HCT116 (cell line): ENCODE measurements at regions of chr15 and their contacts with region 1.

Region 1: DNA sequence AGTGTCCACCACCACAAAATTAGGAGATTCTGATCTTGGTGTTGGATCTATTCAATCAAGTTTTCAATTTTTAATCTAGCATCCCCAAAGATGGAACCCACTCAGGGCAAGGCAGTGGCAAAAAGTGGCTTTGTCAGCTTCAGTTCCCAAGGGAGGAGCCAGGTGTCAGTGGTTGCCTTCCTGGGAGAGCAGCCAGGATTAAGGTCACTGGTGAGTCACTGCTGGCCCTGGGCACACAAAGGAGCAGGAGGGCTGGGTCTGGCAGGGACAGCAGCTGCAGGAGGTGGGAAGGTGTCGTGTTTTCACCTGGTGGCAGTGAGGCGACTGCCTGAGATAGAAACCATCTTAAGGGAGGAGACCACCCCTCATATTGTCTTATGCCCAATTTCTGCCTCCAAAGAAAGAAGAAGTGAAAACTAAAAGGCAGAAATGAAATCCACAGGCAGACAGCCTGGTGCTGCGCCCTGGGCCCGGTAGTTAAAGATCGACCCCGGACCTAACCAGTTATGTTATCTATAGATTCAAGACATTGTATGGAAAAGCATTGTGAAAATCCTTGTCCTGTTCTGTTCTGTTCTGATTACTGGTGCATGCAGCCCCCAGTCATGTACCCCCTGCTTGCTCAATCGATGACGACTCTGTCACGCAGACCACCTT is 5.9 kb upstream of the KLHL25 start:
- DNase-seq: peak; percentile 78
- ATAC-seq: peak; percentile 92
- H3K4me3 ChIP-seq: no peak overlapping the region
- H3K27ac ChIP-seq: no peak overlapping the region
- H3K4me1 ChIP-seq: peaks cover 15 to 20% of the 10 kb centered on the region in 2 experiments; a peak in 3 of 4 replicates
- H3K27me3 ChIP-seq: no peaks in the 10 kb centered on the region
- CTCF ChIP-seq: peak; percentile 33 to 51 (median 38); a peak in 4 of 6 replicates
- POLR2A ChIP-seq: no peak
- RAD21 ChIP-seq: peak; percentile 66

Region 2: GRCh38 chr15:85689729-85690128 is 110.9 kb before region 1 on chr15:
- CTCF ChIA-PET with region 1: no interaction called
- POLR2A ChIA-PET with region 1: no interaction called
- RAD21 ChIA-PET with region 1: no interaction called
- intact Hi-C with region 1: no loop called
- DNase-seq: no peak
- ATAC-seq: no peak
- H3K4me3 ChIP-seq: no peak overlapping the region
- H3K27ac ChIP-seq: no peak overlapping the region
- H3K4me1 ChIP-seq: no peaks in the 10 kb centered on the region
- H3K27me3 ChIP-seq: no peaks in the 10 kb centered on the region
- CTCF ChIP-seq: no peak
- POLR2A ChIP-seq: no peak
- RAD21 ChIP-seq: no peak

Region 3: GRCh38 chr15:85840065-85840801 is 39.6 kb after region 1 on chr15:
- CTCF ChIA-PET with region 1: interaction called, 6 read pairs
- POLR2A ChIA-PET with region 1: no interaction called
- RAD21 ChIA-PET with region 1: no interaction called
- intact Hi-C with region 1: loop called (anchors 2 kb)
- DNase-seq: peak; percentile 77
- ATAC-seq: peak; percentile 98
- H3K4me3 ChIP-seq: peak overlapping the region; percentile 24 to 52
- H3K27ac ChIP-seq: no peak overlapping the region
- H3K4me1 ChIP-seq: peaks cover 0 to 11% of the 10 kb centered on the region in 2 experiments; a peak in 3 of 4 replicates
- H3K27me3 ChIP-seq: 0 out of 2 replicates have a peak, but pooled peaks cover 3% of the 10 kb centered on the region
- CTCF ChIP-seq: peak; percentile 87 to 91 (median 87)
- POLR2A ChIP-seq: no peak
- RAD21 ChIP-seq: peak; percentile 88

Region 4: GRCh38 chr15:85854345-85855097 is 53.9 kb after region 1 on chr15:
- CTCF ChIA-PET with region 1: no interaction called
- POLR2A ChIA-PET with region 1: no interaction called
- RAD21 ChIA-PET with region 1: no interaction called
- intact Hi-C with region 1: no loop called
- DNase-seq: peak; percentile 52
- ATAC-seq: peak; percentile 73
- H3K4me3 ChIP-seq: no peak overlapping the region
- H3K27ac ChIP-seq: no peak overlapping the region
- H3K4me1 ChIP-seq: peaks cover 0 to 4% of the 10 kb centered on the region in 2 experiments; a peak in 1 of 4 replicates
- H3K27me3 ChIP-seq: peaks cover 13% of the 10 kb centered on the region; the same call in 1 of the 2 replicates
- CTCF ChIP-seq: peak; percentile 64 to 93 (median 76); a peak in 5 of 6 replicates
- POLR2A ChIP-seq: no peak
- RAD21 ChIP-seq: peak; percentile 84